ENCODE measurements at regions of chr1 and their contacts with region 1.

Region 1: DNA sequence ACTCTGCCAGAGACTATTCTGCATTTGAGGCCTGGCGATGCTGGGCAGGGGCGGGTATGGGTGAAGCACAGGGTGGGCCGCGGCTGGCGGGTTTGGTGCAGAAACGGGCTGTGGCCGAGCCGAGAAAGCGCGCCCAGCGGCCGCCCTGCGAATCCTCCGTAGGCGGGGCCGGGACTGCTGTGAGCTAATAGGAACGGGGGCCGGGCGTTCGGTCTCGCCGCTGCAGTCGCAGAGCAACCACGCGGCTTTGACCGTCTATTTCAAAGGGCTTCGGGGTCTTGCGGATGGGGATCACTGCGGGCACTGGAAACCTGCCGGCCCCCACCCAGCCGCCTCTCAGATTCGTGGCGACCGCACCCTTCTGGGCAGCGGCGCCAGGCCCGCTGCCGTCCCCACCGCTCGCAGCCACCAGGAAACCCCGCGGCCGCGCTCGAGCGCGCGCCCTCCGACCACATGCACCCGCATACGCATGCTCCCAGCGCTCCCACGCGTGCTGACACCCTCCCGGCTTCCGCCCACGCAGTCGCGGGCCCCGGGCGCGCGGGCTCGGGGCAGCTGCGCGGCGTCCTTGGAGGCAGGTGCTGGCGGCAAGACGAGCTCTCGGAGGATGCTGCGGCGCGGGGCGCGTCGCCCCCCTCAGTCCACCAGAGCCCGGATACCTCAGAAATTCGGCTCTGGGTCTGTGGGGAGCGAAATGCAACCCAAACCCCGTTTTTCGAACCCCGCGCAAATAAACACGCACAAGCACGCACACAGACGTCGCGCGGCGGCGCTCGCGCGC is 32.6 kb downstream of the DNTTIP2 start:
- DNase-seq: peak; percentile 89
- ATAC-seq: peak; percentile 68
- H3K4me3 Mint-ChIP-seq: peak overlapping the region; percentile 95
- H3K27ac Mint-ChIP-seq: no peak overlapping the region
- H3K4me1 Mint-ChIP-seq: peaks cover 13% of the 10 kb centered on the region
- H3K27me3 Mint-ChIP-seq: peaks cover 5% of the 10 kb centered on the region
- CTCF ChIP-seq: no peak

Region 2: GRCh38 chr1:92862605-92863004 is 983.8 kb before region 1 on chr1:
- CTCF ChIA-PET with region 1: no interaction called
- POLR2A ChIA-PET with region 1: no interaction called
- DNase-seq: no peak
- ATAC-seq: no peak
- H3K4me3 Mint-ChIP-seq: no peak overlapping the region
- H3K27ac Mint-ChIP-seq: no peak overlapping the region
- H3K4me1 Mint-ChIP-seq: no peaks in the 10 kb centered on the region
- H3K27me3 Mint-ChIP-seq: no peaks in the 10 kb centered on the region
- CTCF ChIP-seq: no peak

Region 3: GRCh38 chr1:93433407-93433961 is 412.9 kb before region 1 on chr1:
- CTCF ChIA-PET with region 1: interaction called, 12 read pairs
- POLR2A ChIA-PET with region 1: no interaction called
- DNase-seq: peak; percentile 56
- ATAC-seq: peak; percentile 90
- H3K4me3 Mint-ChIP-seq: no peak overlapping the region
- H3K27ac Mint-ChIP-seq: no peak overlapping the region
- H3K4me1 Mint-ChIP-seq: no peaks in the 10 kb centered on the region
- H3K27me3 Mint-ChIP-seq: no peaks in the 10 kb centered on the region
- CTCF ChIP-seq: no peak

Region 4: GRCh38 chr1:93635614-93636543 is 210.5 kb before region 1 on chr1:
- CTCF ChIA-PET with region 1: interaction called, 119 read pairs
- POLR2A ChIA-PET with region 1: interaction called, 4 read pairs
- DNase-seq: peak; percentile 61
- ATAC-seq: peak; percentile 90
- H3K4me3 Mint-ChIP-seq: peak overlapping the region; percentile 25; the same call in 1 of the 2 replicates
- H3K27ac Mint-ChIP-seq: peak overlapping the region; percentile 97
- H3K4me1 Mint-ChIP-seq: peaks cover 36% of the 10 kb centered on the region
- H3K27me3 Mint-ChIP-seq: no peaks in the 10 kb centered on the region
- CTCF ChIP-seq: no peak

Region 5: GRCh38 chr1:93680757-93681550 is 165.4 kb before region 1 on chr1:
- CTCF ChIA-PET with region 1: interaction called, 14 read pairs
- POLR2A ChIA-PET with region 1: interaction called, 5 read pairs
- DNase-seq: peak; percentile 89
- ATAC-seq: peak; percentile 90
- H3K4me3 Mint-ChIP-seq: peak overlapping the region; percentile 94
- H3K27ac Mint-ChIP-seq: peak overlapping the region; percentile 95
- H3K4me1 Mint-ChIP-seq: peaks cover 36% of the 10 kb centered on the region
- H3K27me3 Mint-ChIP-seq: peaks cover 32% of the 10 kb centered on the region
- CTCF ChIP-seq: no peak

Region 6: DNA sequence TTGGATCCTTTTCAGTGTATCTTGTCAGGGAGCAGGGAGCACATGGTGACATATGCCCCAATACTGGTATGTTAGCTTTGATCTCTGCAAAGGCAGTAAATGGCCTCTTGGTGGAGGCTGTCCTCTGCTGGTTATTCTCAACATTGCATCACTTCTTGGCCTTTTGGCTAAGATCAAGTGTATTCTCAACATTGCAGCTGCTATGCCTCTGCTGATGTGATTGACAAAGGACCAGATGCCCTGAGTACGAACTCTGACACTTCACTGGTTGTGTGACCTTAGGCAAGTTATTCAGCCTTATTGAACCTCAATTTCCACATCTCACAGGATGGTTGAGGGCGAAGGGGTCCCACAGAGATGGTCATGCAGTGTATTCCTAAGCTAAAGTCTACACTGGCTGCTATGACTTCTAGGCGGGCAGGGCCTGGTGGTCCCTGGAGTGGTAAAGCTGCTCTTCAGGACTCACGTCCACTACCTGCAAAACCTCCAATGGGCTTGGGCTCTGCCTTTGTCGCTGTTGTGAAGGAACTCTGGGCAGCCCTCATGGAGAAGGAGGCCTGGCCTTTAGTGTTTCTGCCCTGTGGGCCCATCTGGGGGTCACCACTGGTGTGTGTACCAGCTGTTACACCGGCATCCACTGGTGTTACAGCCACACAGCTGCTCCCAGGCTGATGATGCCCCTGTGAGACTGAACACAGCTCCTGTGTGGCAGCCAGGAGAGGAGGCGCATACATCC is 32.2 kb before region 1 on chr1:
- CTCF ChIA-PET with region 1: interaction called, 135 read pairs
- POLR2A ChIA-PET with region 1: interaction called, 6 read pairs
- DNase-seq: peak; percentile 65
- ATAC-seq: peak; percentile 75
- H3K4me3 Mint-ChIP-seq: no peak overlapping the region
- H3K27ac Mint-ChIP-seq: no peak overlapping the region
- H3K4me1 Mint-ChIP-seq: peaks cover 57% of the 10 kb centered on the region
- H3K27me3 Mint-ChIP-seq: no peaks in the 10 kb centered on the region
- CTCF ChIP-seq: peak; percentile 65